ENCODE measurements at regions of chr4 and their contacts with region 1.

Region 1: DNA sequence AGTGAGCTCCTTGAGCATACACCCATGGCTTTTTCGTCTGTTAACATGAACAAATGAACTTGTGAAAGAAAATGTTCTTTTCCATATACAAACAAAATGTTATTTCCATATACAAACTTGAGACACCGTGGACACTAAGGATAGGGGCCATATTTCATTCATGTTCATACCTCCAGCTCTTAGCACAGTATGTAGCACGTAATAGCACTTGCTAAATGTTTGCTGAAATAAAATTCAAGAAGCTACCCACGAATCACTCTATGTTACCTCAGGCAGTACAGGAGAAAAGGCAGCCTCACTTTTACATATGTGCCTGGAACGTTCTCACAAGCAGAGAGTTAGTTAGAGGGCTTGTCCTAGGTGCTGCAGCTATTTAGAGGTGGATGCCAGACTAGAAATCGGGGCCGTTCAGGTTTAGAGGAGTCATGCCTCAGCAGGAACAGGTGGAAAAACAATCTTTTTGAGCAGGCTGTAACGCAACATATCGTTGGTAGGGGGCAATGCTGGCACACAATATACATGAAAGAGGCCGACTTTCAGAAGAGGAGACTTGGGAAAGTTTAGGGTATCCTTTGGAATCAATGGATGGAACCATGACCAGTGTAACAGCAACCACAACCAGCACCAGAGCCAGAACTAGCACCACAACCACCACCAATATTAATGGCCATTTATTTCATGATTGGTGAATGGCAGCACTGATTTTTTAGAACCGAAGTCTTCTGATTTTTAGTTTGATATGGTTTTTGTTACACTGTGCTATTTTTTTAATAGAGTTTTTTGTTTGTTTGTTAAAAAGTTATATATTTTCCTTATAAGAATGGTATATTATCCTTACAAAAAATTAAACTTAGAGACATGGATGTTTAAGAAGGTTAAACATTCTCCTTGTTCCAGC is 14.8 kb upstream of the PAQR3 start:
- H3K4me3 ChIP-seq: no peak overlapping the region
- H3K27ac ChIP-seq: no peak overlapping the region
- H3K4me1 ChIP-seq: no peaks in the 10 kb centered on the region
- CTCF ChIP-seq: peak; percentile 57

Region 2: GRCh38 chr4:78971326-78971725 is 17.3 kb after region 1 on chr4:
- CTCF ChIA-PET with region 1: no interaction called
- POLR2A ChIA-PET with region 1: interaction called, 10 read pairs
- H3K4me3 ChIP-seq: no peak overlapping the region
- H3K27ac ChIP-seq: no peak overlapping the region
- H3K4me1 ChIP-seq: no peaks in the 10 kb centered on the region
- CTCF ChIP-seq: no peak

Region 3: GRCh38 chr4:79065262-79065661 is 111.2 kb after region 1 on chr4:
- CTCF ChIA-PET with region 1: no interaction called
- POLR2A ChIA-PET with region 1: no interaction called
- H3K4me3 ChIP-seq: no peak overlapping the region
- H3K27ac ChIP-seq: no peak overlapping the region
- H3K4me1 ChIP-seq: no peaks in the 10 kb centered on the region
- CTCF ChIP-seq: no peak